Panc1 (cell line): ENCODE measurements at regions of chr10 and their contacts with region 1.

Region 1: DNA sequence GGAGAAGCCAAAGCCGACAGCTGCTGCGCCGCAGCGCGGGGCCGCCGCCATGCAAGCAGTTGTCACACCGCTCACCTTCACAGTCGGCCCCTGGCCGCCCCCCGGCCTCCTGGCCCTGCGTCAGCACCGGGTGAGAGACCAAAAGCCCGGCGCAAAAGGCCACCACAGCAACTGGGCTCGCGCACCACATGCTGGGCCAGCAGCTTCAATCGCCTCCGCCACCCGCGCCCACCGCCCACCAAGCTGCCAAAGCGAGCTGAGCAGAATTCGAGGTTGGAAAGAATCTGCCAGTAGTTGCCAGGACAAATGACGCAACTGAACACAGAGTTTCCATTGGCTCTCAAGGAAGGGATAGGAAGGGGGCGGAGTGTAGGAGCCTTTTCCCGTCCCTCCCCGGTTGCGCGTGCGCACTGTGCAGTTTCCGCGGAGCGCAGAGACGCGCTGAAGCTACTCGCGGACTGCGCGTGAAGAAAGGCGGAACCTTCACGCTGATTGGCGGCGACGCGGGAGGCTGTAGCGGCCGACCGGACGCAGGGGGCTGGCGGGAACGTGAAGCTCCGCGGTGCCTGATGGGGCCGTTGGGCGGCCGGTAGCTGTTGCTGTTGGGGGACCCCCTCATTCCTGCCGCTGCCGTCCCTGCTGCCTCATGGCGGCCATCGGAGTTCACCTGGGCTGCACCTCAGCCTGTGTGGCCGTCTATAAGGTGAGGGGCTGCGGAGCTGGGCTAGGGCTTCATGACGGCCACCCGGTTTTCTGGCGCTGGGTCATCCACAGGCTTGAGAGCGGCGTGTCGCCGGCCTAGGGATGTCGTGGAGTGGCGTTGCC is at the starts of genes CDNF, HSPA14 and MSANTD7:
- DNase-seq: peak; percentile 95
- ATAC-seq: peak; percentile 99
- H3K4me3 ChIP-seq: peak within 1 kb of the TSS; percentile 79 to 94
- H3K27ac ChIP-seq: peak within 1 kb of the TSS; percentile 86
- H3K4me1 ChIP-seq: no peaks in the 10 kb centered on the region; the same call in 1 of the 2 replicates
- H3K27me3 ChIP-seq: no peaks in the 10 kb centered on the region
- CTCF ChIP-seq: no peak
- total RNA-seq, gene CDNF: 0.39 TPM
- total RNA-seq, gene HSPA14: 15.9 TPM
- total RNA-seq, gene MSANTD7: 10.4 TPM

Region 2: DNA sequence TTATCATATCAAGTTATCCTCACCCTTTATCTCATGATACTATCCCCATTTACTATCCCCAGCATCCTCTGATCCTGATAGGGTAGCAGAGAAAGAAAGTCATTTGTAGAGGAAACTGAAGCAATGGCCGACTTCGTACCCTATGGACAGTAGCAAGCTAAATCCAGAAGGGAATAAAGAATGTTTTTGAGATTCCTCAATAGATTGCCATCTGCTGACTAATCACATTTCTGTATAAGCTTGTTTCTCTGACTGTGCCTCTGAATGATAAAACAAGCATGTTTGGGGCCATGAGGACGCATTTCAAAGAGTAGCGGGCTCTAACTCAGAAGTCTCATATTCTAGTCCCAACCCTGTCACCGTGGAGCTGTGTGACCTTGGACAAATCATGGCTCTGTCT is 50.0 kb before region 1 on chr10:
- CTCF ChIA-PET with region 1: no interaction called
- POLR2A ChIA-PET with region 1: no interaction called
- in situ Hi-C with region 1: no loop called
- intact Hi-C with region 1: no loop called
- DNase-seq: no peak
- ATAC-seq: no peak
- H3K4me3 ChIP-seq: no peak overlapping the region
- H3K27ac ChIP-seq: no peak overlapping the region
- H3K4me1 ChIP-seq: no peaks in the 10 kb centered on the region
- H3K27me3 ChIP-seq: no peaks in the 10 kb centered on the region; the same call in 1 of the 2 replicates
- CTCF ChIP-seq: no peak

Region 3: GRCh38 chr10:14884082-14884481 is 46.1 kb after region 1 on chr10:
- CTCF ChIA-PET with region 1: no interaction called
- POLR2A ChIA-PET with region 1: interaction called, 12 read pairs
- in situ Hi-C with region 1: no loop called
- intact Hi-C with region 1: no loop called
- DNase-seq: no peak
- ATAC-seq: no peak
- H3K4me3 ChIP-seq: no peak overlapping the region
- H3K27ac ChIP-seq: no peak overlapping the region
- H3K4me1 ChIP-seq: peaks cover 8% of the 10 kb centered on the region; the same call in 1 of the 2 replicates
- H3K27me3 ChIP-seq: no peaks in the 10 kb centered on the region
- CTCF ChIP-seq: no peak

Region 4: DNA sequence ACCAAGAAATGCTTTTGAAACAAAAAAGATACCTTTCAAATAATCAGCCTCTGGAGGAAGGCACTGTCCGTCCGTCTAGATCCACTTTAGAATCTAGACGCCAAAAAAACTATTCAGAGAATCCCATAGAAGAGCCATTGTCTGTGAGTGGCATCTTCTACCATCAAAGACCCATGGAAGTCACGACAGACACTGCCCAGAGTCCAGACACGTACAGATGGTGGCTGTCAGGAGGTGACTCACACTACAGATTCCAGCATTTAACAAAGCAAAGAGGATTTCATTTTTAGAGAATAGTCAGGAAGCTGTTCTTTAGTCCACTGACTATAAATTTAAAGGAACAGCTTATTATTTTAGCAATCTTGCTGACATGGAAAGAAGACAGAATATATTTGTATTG is 1672.0 kb after region 1 on chr10:
- CTCF ChIA-PET with region 1: no interaction called
- POLR2A ChIA-PET with region 1: no interaction called
- in situ Hi-C with region 1: no loop called
- intact Hi-C with region 1: no loop called
- DNase-seq: no peak
- ATAC-seq: no peak
- H3K4me3 ChIP-seq: no peak overlapping the region
- H3K27ac ChIP-seq: no peak overlapping the region
- H3K4me1 ChIP-seq: no peaks in the 10 kb centered on the region
- H3K27me3 ChIP-seq: no peaks in the 10 kb centered on the region
- CTCF ChIP-seq: no peak